HAP-1 (cell line): ENCODE measurements at regions of chr10 and their contacts with region 1.

Region 1: GRCh38 chr10:44386546-44387052 is 1.7 kb upstream of the CXCL12 start:
- DNase-seq: peak; percentile 20 to 56
- H3K4me3 ChIP-seq: no peak overlapping the region
- H3K4me1 ChIP-seq: no peaks in the 10 kb centered on the region
- H3K27me3 ChIP-seq: no peaks in the 10 kb centered on the region

Region 2: DNA sequence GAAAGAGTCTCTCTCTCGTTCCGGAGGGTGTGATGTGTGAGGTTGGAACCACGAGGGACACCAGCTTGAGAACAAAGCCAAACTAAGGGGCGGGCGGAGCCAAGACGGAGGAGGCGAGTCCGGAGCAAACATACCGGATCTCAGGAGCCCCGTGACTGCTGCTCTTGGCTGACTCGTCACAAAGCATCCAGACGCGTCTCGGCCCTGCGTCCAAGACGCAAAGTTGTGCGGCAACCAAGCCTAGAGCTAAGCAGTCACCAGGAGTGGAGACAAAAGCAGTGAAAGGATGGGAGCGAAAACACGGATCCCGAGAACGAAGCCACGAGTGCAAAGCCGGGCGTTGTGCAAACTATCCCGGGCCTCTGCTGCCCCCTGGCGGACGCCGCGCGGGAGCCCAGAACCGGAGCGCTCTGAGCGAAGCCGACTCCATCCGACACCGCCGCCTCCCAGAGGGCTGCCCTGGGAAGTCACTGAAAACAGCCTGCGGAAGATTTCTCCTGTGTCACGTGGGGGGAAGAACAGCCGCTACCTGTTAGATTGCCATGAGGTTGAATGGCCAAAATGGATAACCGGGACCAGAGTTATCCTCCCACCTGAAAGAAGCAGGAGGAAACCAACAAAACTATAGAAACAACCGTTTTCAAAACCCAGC is 478.2 kb after region 1 on chr10:
- in situ Hi-C with region 1: loop called (anchors 5 kb)
- DNase-seq: peak; percentile 62 to 94
- H3K4me3 ChIP-seq: peak overlapping the region; percentile 28
- H3K4me1 ChIP-seq: peaks cover 5% of the 10 kb centered on the region
- H3K27me3 ChIP-seq: peaks cover 21% of the 10 kb centered on the region